ENCODE measurements at regions of chr5 and their contacts with region 1.

Region 1: DNA sequence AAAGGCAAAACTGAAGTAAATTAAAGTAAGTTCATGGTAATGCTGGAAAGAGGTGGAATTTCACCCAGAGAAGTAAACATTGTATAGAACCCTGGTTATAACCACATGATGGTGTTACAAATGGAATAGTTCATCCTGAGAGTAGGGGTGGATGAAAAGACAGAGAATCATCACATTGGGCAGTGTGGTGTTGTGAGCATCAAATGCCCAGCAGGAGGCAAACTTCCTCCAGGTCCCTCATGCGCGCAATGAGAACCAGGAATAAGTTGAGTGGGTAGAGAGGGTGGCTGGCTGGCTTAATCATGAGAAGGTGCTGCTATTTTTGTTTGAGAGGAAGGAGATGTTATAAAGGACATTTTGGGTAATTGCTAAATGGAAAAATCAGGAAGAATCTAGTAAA is 163.3 kb upstream of the HMHB1 start:
- DNase-seq: peak; percentile 21
- H3K4me3 Mint-ChIP-seq: no peak overlapping the region
- H3K27ac Mint-ChIP-seq: no peak overlapping the region
- H3K4me1 Mint-ChIP-seq: peaks cover 18% of the 10 kb centered on the region
- H3K27me3 Mint-ChIP-seq: peaks cover 3% of the 10 kb centered on the region

Region 2: GRCh38 chr5:143403593-143404415 is 244.9 kb before region 1 on chr5 and contains the start of gene NR3C1:
- CTCF ChIA-PET with region 1: no interaction called
- POLR2A ChIA-PET with region 1: no interaction called
- intact Hi-C with region 1: no loop called
- DNase-seq: peak; percentile 87
- H3K4me3 Mint-ChIP-seq: peak within 1 kb of the TSS; percentile 89
- H3K27ac Mint-ChIP-seq: peak within 1 kb of the TSS; percentile 100
- H3K4me1 Mint-ChIP-seq: peaks cover 47% of the 10 kb centered on the region
- H3K27me3 Mint-ChIP-seq: no peaks in the 10 kb centered on the region
- total RNA-seq, gene NR3C1: 48.6 to 53.9 TPM

Region 3: DNA sequence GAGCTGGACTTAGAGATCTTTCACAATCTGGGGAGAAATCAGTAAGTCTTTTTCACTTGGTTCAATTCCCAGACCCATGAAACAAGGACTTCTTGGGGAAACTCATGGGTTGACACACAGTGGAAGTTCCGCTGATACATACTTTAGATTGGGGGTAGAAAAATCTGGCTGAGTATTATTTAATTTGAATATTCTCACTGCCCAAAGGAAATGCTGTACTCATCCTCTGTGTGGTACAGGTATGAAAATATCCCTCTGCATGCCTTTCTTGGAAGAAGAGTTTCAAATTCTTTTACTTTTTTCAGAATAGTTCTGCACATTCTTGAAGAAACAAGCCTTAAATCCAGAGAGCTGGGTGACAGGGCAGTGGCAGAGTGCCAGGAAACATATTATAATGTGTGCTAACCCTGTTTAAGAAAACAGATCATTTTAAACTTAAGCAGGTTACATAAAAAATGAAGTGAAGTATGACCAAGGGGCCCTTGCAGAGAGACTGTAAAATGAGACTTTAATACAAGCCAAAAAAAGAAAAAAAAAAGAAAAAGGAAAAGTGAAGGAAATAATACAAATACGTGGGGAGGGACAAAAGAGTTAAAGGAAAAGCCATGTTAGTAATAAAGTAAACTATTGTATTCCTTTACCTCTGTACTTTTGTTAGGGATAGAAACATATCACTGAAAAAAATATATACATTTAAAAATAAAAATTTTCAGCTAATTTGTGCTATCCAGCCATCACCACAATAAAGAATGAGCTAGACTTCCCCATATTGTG is 71.8 kb before region 1 on chr5:
- CTCF ChIA-PET with region 1: no interaction called
- POLR2A ChIA-PET with region 1: no interaction called
- intact Hi-C with region 1: no loop called
- DNase-seq: no peak
- H3K4me3 Mint-ChIP-seq: no peak overlapping the region
- H3K27ac Mint-ChIP-seq: no peak overlapping the region
- H3K4me1 Mint-ChIP-seq: peaks cover 3% of the 10 kb centered on the region
- H3K27me3 Mint-ChIP-seq: no peaks in the 10 kb centered on the region

Region 4: GRCh38 chr5:143613329-143613728 is 35.4 kb before region 1 on chr5:
- CTCF ChIA-PET with region 1: no interaction called
- POLR2A ChIA-PET with region 1: no interaction called
- intact Hi-C with region 1: no loop called
- DNase-seq: no peak
- H3K4me3 Mint-ChIP-seq: no peak overlapping the region
- H3K27ac Mint-ChIP-seq: no peak overlapping the region
- H3K4me1 Mint-ChIP-seq: peaks cover 2% of the 10 kb centered on the region
- H3K27me3 Mint-ChIP-seq: peaks cover 2% of the 10 kb centered on the region

Region 5: GRCh38 chr5:143693651-143694252 is 45.1 kb after region 1 on chr5:
- CTCF ChIA-PET with region 1: interaction called, 4 read pairs
- POLR2A ChIA-PET with region 1: no interaction called
- intact Hi-C with region 1: loop called (anchors 2 kb)
- DNase-seq: peak; percentile 22
- H3K4me3 Mint-ChIP-seq: no peak overlapping the region
- H3K27ac Mint-ChIP-seq: no peak overlapping the region
- H3K4me1 Mint-ChIP-seq: peaks cover 21% of the 10 kb centered on the region
- H3K27me3 Mint-ChIP-seq: peaks cover 4% of the 10 kb centered on the region